ENCODE measurements at regions of chr6 and their contacts with region 1.

Region 1: DNA sequence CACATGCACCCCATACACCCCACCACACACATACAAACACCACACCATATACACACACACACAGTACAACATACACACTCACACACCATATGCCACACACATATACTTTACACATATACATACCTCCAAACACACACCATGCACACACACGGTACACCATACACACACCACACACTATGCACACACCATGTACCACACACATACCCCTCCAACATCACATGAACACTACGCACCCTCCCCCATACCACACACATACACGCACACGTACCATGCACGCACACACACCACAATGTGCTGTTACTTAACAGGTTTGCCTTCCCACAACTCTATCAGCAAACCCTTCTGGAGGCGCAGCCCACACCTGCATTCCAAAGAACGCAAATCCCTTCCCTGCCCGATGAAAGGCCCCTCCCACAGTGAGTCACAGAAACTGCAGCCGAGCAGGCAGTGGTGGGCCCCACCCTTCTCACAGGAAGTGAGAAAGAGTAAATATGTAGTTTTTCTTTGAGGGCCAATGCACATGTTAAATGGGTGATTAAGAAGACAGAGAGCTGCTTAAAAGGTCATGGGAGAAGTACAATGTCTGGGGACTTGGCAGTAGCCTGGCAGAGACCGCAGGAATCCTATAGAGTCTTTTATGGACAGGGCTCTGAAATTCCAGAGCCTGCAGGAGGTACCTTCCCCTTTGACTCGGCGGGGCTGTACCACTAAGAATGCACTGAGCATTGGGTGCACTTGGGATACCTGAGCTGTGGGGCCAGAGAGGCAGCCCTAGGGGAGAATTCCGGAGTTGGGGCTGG is 34.1 kb upstream of the EZR start:
- DNase-seq: peak; percentile 87 to 97 (median 93)
- H3K4me3 ChIP-seq: peak overlapping the region; percentile 53 to 81
- H3K4me3 Mint-ChIP-seq: no peak overlapping the region
- H3K27ac ChIP-seq: peak overlapping the region; percentile 91
- H3K27ac Mint-ChIP-seq: no peak overlapping the region
- H3K4me1 ChIP-seq: peaks cover 74% of the 10 kb centered on the region
- H3K4me1 Mint-ChIP-seq: peaks cover 27 to 37% (median 29%) of the 10 kb centered on the region in 4 donors
- H3K27me3 ChIP-seq: no peaks in the 10 kb centered on the region
- H3K27me3 Mint-ChIP-seq: no peaks in the 10 kb centered on the region

Region 2: GRCh38 chr6:158644231-158645063 is 208.8 kb before region 1 on chr6 and contains the start of gene DYNLT1:
- CTCF ChIA-PET with region 1: no interaction called
- POLR2A ChIA-PET with region 1: interaction called, 9 read pairs
- intact Hi-C with region 1: loop called (anchors 10 kb)
- DNase-seq: peak; percentile 78 to 95 (median 88)
- H3K4me3 ChIP-seq: peak within 1 kb of the TSS; percentile 84 to 85
- H3K4me3 Mint-ChIP-seq: peak within 1 kb of the TSS; percentile 99 to 100 (median 99)
- H3K27ac ChIP-seq: peak within 1 kb of the TSS; percentile 96
- H3K27ac Mint-ChIP-seq: peak within 1 kb of the TSS; percentile 92 to 100 (median 99)
- H3K4me1 ChIP-seq: peaks cover 58% of the 10 kb centered on the region
- H3K4me1 Mint-ChIP-seq: peaks cover 46 to 82% (median 55%) of the 10 kb centered on the region in 4 donors
- H3K27me3 ChIP-seq: no peaks in the 10 kb centered on the region
- H3K27me3 Mint-ChIP-seq: no peaks in the 10 kb centered on the region
- total RNA-seq, gene DYNLT1: 78.8 to 90.4 TPM

Region 3: DNA sequence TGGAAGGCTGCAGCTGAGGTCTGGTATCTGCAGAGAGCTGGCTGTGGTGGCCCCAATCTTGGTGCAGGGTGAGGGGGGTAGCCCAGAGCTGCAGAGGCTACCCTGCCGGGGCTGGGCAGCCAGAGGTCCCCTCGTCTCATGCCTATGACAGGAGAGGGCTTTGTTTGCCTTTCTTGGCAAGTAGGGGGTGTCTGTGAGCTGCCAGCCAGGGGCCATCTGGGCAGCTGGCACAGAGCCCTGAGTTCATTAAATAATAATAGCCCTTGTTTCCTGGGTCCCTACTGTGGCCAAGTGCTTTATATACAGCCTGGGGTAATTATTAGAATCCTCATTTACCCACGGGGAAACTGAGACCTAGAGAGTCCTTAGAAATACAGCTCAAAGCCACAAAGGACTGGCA is 100.7 kb before region 1 on chr6:
- CTCF ChIA-PET with region 1: no interaction called
- POLR2A ChIA-PET with region 1: no interaction called
- intact Hi-C with region 1: no loop called
- DNase-seq: peak in 1 of 5 donors; percentile 27
- H3K4me3 ChIP-seq: no peak overlapping the region
- H3K4me3 Mint-ChIP-seq: no peak overlapping the region
- H3K27ac ChIP-seq: no peak overlapping the region
- H3K27ac Mint-ChIP-seq: peak overlapping the region in 2 of 7 donors; percentile 51 to 53
- H3K4me1 ChIP-seq: no peaks in the 10 kb centered on the region
- H3K4me1 Mint-ChIP-seq: peaks cover 0 to under 1% (median 0%) of the 10 kb centered on the region in 4 donors
- H3K27me3 ChIP-seq: no peaks in the 10 kb centered on the region
- H3K27me3 Mint-ChIP-seq: no peaks in the 10 kb centered on the region

Region 4: DNA sequence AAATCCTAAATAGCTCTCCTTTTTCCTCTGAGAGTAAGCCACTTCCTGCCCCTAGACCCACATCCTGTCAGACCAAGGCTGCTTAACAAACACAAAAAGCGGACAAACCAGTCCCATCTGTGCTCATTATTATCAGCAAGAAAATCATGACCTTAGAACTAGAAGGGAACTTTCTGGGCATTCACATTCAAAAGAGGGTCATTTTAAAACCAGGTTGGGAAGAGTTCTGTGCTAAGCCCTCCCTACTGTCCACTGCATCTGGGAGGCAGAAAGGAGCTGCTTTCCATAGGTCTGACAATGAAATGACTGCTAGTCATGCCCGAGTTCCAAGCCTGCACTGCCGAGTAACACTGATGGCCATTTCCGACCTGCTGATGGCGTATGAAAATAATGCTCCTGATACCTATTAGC is 49.5 kb before region 1 on chr6:
- CTCF ChIA-PET with region 1: interaction called, 5 read pairs
- POLR2A ChIA-PET with region 1: interaction called, 27 read pairs
- intact Hi-C with region 1: no loop called
- DNase-seq: peak; percentile 68 to 78 (median 73)
- H3K4me3 ChIP-seq: peak overlapping the region; percentile 15 to 49
- H3K4me3 Mint-ChIP-seq: peak overlapping the region; percentile 71 to 90 (median 86)
- H3K27ac ChIP-seq: peak overlapping the region; percentile 52
- H3K27ac Mint-ChIP-seq: peak overlapping the region; percentile 85 to 96 (median 92)
- H3K4me1 ChIP-seq: peaks cover 98% of the 10 kb centered on the region
- H3K4me1 Mint-ChIP-seq: peaks cover 76 to 98% (median 86%) of the 10 kb centered on the region in 4 donors
- H3K27me3 ChIP-seq: no peaks in the 10 kb centered on the region
- H3K27me3 Mint-ChIP-seq: no peaks in the 10 kb centered on the region

Region 5: GRCh38 chr6:158808941-158809678 is 44.2 kb before region 1 on chr6:
- CTCF ChIA-PET with region 1: interaction called, 3 read pairs
- POLR2A ChIA-PET with region 1: interaction called, 70 read pairs
- intact Hi-C with region 1: no loop called
- DNase-seq: peak; percentile 56 to 72 (median 71)
- H3K4me3 ChIP-seq: peak overlapping the region in 1 of 2 donors; percentile 10
- H3K4me3 Mint-ChIP-seq: peak overlapping the region; percentile 45 to 80 (median 64)
- H3K27ac ChIP-seq: peak overlapping the region; percentile 3
- H3K27ac Mint-ChIP-seq: peak overlapping the region; percentile 81 to 96 (median 88)
- H3K4me1 ChIP-seq: peaks cover 100% of the 10 kb centered on the region
- H3K4me1 Mint-ChIP-seq: peaks cover 86 to 99% (median 92%) of the 10 kb centered on the region in 4 donors
- H3K27me3 ChIP-seq: no peaks in the 10 kb centered on the region
- H3K27me3 Mint-ChIP-seq: no peaks in the 10 kb centered on the region

Region 6: DNA sequence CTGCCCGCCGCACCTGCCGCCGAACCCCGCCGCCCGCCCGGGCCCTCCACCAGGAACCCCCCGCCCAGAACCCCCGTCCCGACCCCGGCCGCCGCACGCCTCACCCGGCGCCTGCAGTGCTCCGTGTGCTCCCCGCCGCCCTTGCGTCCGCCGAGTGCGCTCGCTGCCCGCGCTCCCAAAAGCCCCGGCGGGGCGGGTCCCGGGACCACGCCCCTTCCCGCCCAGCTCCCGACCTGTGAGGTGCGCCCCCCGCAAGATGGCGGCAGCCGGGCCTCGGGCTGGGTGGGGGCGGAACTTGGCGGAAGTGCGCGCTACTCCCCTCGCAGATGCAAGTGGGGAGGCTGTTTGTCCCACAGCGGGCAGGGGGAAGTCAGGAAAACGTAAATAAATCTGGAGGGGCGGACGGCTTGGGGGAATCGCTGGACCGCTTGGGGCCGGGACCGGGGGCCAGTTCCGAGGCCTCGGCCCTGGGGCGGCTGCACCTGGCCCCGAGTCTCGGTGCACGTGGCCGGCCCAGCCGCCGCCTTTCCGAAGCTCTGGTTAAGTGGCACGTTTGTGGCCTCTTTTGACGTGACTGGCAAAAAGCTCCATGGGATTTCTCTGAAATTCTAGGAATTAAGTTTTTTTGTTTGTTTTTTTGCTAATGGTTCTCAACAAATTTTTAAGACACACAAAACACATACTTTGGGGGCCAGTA is 33.9 kb before region 1 on chr6 and contains the start of gene EZR:
- CTCF ChIA-PET with region 1: interaction called, 3 read pairs
- POLR2A ChIA-PET with region 1: interaction called, 180 read pairs
- intact Hi-C with region 1: loop called (anchors 1 kb)
- DNase-seq: peak; percentile 82 to 86 (median 84)
- H3K4me3 ChIP-seq: peak within 1 kb of the TSS in 1 of 2 donors; percentile 77
- H3K4me3 Mint-ChIP-seq: peak within 1 kb of the TSS; percentile 79 to 98 (median 84)
- H3K27ac ChIP-seq: peak within 1 kb of the TSS; percentile 86
- H3K27ac Mint-ChIP-seq: peak within 1 kb of the TSS; percentile 84 to 100 (median 96)
- H3K4me1 ChIP-seq: peaks cover 31% of the 10 kb centered on the region
- H3K4me1 Mint-ChIP-seq: peaks cover 23 to 58% (median 27%) of the 10 kb centered on the region in 4 donors
- H3K27me3 ChIP-seq: no peaks in the 10 kb centered on the region
- H3K27me3 Mint-ChIP-seq: no peaks in the 10 kb centered on the region
- total RNA-seq, gene EZR: 264 to 277 TPM

Region 7: GRCh38 chr6:158910484-158911348 is 57.4 kb after region 1 on chr6:
- CTCF ChIA-PET with region 1: no interaction called
- POLR2A ChIA-PET with region 1: interaction called, 31 read pairs
- intact Hi-C with region 1: no loop called
- DNase-seq: peak in 2 of 5 donors; percentile 10 to 21
- H3K4me3 ChIP-seq: peak overlapping the region in 1 of 2 donors; percentile 21
- H3K4me3 Mint-ChIP-seq: peak overlapping the region; percentile 35 to 91 (median 66)
- H3K27ac ChIP-seq: no peak overlapping the region
- H3K27ac Mint-ChIP-seq: peak overlapping the region in 6 of 7 donors; percentile 23 to 83 (median 62)
- H3K4me1 ChIP-seq: peaks cover 33% of the 10 kb centered on the region
- H3K4me1 Mint-ChIP-seq: peaks cover 21 to 55% (median 31%) of the 10 kb centered on the region in 4 donors
- H3K27me3 ChIP-seq: no peaks in the 10 kb centered on the region
- H3K27me3 Mint-ChIP-seq: peaks cover 0 to 1% of the 10 kb centered on the region in 2 donors

Region 8: DNA sequence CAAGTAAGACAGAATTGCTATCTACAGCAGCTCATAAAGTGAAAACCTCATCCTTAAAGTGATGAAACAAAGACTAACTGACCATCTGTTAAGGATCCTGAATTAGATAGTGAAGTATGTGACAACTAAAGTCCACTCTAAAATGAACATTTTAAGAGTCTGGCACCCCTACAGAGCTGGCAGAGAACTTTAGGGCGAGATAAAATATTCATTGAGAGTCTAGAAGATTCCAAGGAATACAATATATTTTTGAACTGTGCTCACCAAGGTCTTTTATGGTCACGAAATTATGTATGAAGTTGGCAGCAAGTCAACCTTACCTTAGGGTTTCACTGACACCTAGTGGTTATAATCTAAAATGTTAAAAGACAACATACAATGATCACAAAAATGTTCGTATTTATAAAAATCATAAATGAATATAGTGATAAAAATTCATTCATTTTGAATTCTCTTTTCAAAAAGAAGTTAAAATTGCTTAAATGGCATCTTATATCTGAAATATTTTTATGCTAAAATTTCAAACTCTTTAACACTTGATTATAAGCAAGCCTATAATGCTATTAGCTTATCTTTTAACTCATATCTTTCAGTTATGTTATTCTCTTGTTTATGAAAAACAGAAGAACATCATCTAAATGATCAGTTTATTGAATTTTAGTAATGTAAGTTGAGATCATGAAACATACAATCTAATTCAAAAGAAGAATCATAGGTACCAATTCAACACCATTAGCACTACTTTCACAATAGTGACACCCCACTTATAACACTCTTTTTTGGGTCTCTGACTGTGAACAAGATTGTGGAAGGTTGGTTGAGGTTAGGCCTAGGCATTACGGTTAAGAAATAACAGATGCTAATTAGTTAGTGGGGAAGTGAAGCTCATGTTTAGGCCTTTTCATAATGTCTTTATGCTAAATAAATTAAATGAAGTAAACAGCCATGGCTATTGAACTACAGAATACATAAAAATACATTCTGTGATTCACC is 119.3 kb after region 1 on chr6:
- CTCF ChIA-PET with region 1: interaction called, 4 read pairs
- POLR2A ChIA-PET with region 1: interaction called, 10 read pairs
- intact Hi-C with region 1: no loop called
- DNase-seq: peak in 4 of 5 donors; percentile 57 to 66 (median 60)
- H3K4me3 ChIP-seq: no peak overlapping the region
- H3K4me3 Mint-ChIP-seq: no peak overlapping the region
- H3K27ac ChIP-seq: no peak overlapping the region
- H3K27ac Mint-ChIP-seq: peak overlapping the region in 2 of 7 donors; percentile 31 to 47
- H3K4me1 ChIP-seq: no peaks in the 10 kb centered on the region
- H3K4me1 Mint-ChIP-seq: peaks cover 0 to 3% (median 0%) of the 10 kb centered on the region in 4 donors
- H3K27me3 ChIP-seq: no peaks in the 10 kb centered on the region
- H3K27me3 Mint-ChIP-seq: no peaks in the 10 kb centered on the region

Region 9: DNA sequence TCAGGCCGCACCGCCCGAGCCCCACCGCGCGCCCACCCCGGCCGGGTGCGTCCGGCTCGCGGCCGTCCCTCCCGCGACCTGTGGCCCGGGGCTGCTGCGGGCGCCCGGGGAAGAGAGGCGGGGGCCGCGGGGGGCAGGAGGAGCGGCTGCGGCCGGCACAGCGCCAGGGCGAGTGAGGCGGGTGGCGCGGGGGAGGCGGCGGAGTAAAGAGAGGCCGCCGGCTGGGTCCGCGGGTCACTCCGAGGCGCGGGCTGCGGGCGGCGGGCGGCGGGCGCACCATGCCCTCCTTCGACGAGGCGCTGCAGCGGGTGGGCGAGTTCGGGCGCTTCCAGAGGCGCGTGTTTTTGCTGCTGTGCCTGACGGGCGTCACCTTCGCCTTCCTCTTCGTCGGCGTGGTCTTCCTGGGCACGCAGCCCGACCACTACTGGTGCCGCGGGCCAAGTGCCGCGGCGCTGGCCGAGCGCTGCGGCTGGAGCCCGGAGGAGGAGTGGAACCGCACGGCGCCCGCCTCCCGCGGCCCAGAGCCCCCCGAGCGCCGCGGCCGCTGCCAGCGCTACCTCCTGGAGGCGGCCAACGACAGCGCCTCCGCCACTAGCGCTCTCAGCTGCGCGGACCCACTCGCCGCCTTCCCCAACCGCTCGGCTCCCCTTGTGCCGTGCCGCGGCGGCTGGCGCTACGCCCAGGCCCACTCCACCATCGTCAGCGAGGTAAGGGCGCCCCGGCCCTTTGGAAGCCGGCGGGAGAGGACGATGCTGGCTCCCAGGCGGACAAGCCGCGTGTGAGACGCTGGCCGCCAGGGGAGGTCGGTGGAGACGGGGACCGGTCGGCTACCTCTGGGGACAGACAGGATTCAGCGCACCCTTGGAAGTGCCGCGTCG is 1495.1 kb after region 1 on chr6 and contains the start of gene SLC22A3:
- CTCF ChIA-PET with region 1: no interaction called
- POLR2A ChIA-PET with region 1: no interaction called
- intact Hi-C with region 1: no loop called
- DNase-seq: no peak
- H3K4me3 ChIP-seq: no peak within 1 kb of the TSS
- H3K4me3 Mint-ChIP-seq: peak within 1 kb of the TSS; percentile 30 to 76 (median 72)
- H3K27ac ChIP-seq: no peak within 1 kb of the TSS
- H3K27ac Mint-ChIP-seq: no peak within 1 kb of the TSS
- H3K4me1 ChIP-seq: no peaks in the 10 kb centered on the region
- H3K4me1 Mint-ChIP-seq: peaks cover 3 to 21% (median 10%) of the 10 kb centered on the region in 4 donors
- H3K27me3 ChIP-seq: peaks cover 6% of the 10 kb centered on the region
- H3K27me3 Mint-ChIP-seq: peaks cover 36 to 48% of the 10 kb centered on the region in 2 donors
- total RNA-seq, gene SLC22A3: not detected

Measured in CD4-positive, alpha-beta memory T cell (primary cell).